ENCODE measurements at regions of chr1 and their contacts with region 1.

Region 1: GRCh38 chr1:163130225-163130856 is 61.2 kb downstream of the RGS4 start:
- DNase-seq: no peak
- H3K4me3 ChIP-seq: no peak overlapping the region
- CTCF ChIP-seq: no peak

Region 2: GRCh38 chr1:163085041-163085903 is 45.1 kb before region 1 on chr1:
- in situ Hi-C with region 1: loop called (anchors 5 kb)
- DNase-seq: no peak
- H3K4me3 ChIP-seq: no peak overlapping the region
- CTCF ChIP-seq: no peak

Region 3: DNA sequence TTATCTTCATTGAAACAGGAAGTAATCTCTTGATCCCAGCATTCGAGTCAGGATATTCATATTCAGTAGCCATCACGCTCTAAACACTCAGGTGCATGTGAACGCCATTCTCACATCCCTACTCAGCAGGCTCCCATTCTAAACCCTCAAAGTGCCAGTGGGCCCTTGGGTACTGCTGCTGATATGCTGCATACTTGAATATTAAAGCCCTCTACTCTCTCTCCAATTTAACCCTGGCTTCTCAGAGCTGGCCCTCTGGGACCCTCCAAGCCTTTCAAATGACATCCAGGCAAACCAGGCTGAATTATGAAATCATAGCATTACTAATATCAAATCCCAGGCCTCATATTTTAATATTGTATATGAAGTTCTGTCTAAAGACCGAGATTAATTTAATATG is 659.6 kb after region 1 on chr1:
- in situ Hi-C with region 1: no loop called
- DNase-seq: no peak
- H3K4me3 ChIP-seq: no peak overlapping the region
- CTCF ChIP-seq: no peak

Measured in astrocyte of the cerebellum (primary cell).